ENCODE measurements at regions of chr22 and their contacts with region 1.

Region 1: DNA sequence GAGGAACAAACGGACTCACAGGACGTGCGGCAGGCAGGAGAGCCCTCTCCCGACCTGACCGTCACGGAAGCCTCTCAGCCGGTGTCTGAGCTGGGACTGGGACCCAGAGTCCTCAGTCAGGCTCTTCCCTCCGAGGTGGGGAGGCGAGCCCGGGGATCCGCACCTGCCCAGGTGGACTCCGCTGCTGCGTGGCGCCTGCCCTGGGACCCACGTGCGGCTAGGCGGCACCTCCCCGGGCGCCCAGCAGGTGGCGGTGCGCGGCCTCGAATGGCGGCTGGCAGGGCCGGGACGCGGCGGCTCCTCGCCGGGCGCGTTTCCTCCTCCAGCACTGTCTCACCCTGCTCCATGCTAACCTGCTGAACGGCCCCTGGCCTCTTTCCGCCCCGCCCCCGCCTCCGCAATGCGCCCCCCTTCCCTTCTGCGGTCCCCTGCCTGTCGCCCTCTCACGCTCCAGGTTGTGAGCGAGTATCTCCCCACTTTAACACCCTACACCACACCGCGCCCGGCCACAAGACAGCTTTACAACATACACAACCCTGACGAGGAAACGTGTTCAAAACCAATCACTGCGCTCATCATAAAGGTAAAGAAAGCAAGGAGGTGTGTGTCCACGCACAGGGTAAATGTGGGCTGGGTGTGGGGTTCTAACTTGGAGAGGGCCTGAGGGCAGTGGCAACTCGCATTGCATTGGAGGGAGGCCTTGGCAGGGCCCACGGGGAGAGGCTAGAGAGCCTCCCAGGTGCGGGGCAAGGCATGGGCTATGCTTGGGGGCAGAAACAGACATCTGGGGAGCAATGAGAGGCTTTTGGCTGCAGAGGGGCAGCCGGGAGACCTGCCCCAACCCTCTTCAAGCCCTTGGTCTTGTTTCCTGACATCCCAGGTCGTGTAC is 25.9 kb upstream of the ATXN10 start:
- DNase-seq: peak; percentile 46 to 78 (median 74)
- H3K4me3 ChIP-seq: no peak overlapping the region
- H3K27ac ChIP-seq: no peak overlapping the region
- H3K4me1 ChIP-seq: peaks cover 0 to 6% of the 10 kb centered on the region in 2 donors
- H3K27me3 ChIP-seq: peaks cover 15% of the 10 kb centered on the region
- CTCF ChIP-seq: peak; percentile 59 to 99 (median 82)
- POLR2A ChIP-seq: no peak

Region 2: DNA sequence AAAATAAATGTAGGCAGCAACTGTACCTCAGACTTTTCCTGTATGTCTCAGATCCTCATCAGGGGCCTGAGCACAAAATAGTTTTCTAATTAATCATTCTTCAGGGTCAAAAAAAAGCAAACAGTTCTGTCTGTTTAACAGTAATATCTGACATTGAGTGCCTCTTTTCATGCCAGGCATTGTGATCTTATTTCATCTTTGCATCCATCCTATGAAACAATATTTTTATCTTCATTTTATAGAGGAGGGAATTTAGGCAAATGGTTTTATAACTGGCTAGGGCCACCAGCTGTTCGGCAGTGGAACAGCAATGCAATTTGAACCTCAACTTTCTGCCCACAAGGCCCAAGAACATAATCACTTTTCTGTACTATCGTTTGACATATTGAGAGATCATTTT is 185.6 kb after region 1 on chr22:
- intact Hi-C with region 1: loop called in 1 of 2 experiments (anchors 10 kb)
- DNase-seq: no peak
- H3K4me3 ChIP-seq: no peak overlapping the region
- H3K27ac ChIP-seq: no peak overlapping the region
- H3K4me1 ChIP-seq: peaks cover 4% of the 10 kb centered on the region in 2 donors
- H3K27me3 ChIP-seq: no peaks in the 10 kb centered on the region
- CTCF ChIP-seq: peak; percentile 15 to 50 (median 44)
- POLR2A ChIP-seq: no peak

Region 3: GRCh38 chr22:45960477-45961386 is 315.0 kb after region 1 on chr22:
- intact Hi-C with region 1: no loop called
- DNase-seq: no peak
- H3K4me3 ChIP-seq: no peak overlapping the region
- H3K27ac ChIP-seq: no peak overlapping the region
- H3K4me1 ChIP-seq: no peaks in the 10 kb centered on the region
- H3K27me3 ChIP-seq: no peaks in the 10 kb centered on the region
- CTCF ChIP-seq: no peak
- POLR2A ChIP-seq: no peak

Measured in adrenal gland (tissue), 19 donors.